ENCODE measurements at regions of chr1 and their contacts with region 1.

Region 1: GRCh38 chr1:235971571-235972310 is 93.1 kb downstream of the NID1 start:
- DNase-seq: peak; percentile 88
- H3K4me3 ChIP-seq: peak overlapping the region; percentile 9 to 29 (median 24)
- H3K27ac ChIP-seq: peak overlapping the region; percentile 91
- H3K4me1 ChIP-seq: peaks cover 16% of the 10 kb centered on the region
- H3K27me3 ChIP-seq: no peaks in the 10 kb centered on the region
- CTCF ChIP-seq: peak; percentile 80 to 90

Region 2: DNA sequence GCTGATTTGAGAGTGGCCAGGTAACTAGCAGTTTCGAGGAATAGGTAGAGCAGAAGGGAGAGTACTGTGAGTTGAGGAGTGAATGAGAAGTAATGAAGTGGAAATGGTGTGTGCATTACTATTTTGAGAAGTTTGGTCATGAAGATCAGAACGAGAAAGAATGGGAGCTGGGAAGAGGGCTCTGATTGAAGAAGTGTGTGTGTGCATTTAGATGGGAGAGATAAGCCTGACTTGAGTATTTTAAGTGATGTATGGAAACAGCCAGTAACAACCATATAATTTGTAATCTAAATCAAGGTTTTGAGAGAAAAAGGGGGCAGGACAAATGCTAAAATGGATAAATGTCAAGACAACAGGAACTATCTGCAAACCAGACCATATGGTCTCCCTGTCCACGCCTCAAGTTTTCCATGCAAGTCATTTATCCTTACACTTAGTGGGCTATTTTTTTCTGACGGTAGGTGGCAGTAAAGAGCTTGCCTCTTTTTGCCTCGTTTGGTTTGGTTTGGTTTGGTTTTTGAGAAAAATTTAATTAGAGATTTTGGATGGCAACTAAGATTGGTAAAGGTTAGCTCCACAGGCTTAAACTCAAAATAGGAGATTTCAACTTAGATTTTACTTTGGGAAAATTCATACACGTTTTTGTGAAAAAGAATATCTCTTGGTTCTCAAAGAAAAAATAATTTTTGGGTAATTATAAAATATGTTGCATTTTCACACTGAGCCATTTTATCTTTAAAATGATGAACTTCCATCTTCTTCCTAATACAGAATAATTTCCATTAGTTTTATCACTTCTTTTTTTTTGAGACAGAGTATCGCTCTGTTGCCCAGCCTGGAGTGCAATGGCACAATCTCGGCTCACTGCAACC is 458.0 kb before region 1 on chr1:
- CTCF ChIA-PET with region 1: no interaction called
- dilution Hi-C with region 1: no loop called
- in situ Hi-C with region 1: loop called in 1 of 2 experiments (anchors 25 kb)
- intact Hi-C with region 1: loop called (anchors 1 kb)
- DNase-seq: peak; percentile 59
- H3K4me3 ChIP-seq: no peak overlapping the region
- H3K27ac ChIP-seq: no peak overlapping the region
- H3K4me1 ChIP-seq: no peaks in the 10 kb centered on the region
- H3K27me3 ChIP-seq: no peaks in the 10 kb centered on the region
- CTCF ChIP-seq: peak; percentile 91 to 95

Region 3: GRCh38 chr1:235783148-235783776 is 188.5 kb before region 1 on chr1:
- CTCF ChIA-PET with region 1: no interaction called
- dilution Hi-C with region 1: no loop called
- in situ Hi-C with region 1: no loop called
- intact Hi-C with region 1: loop called (anchors 1 kb)
- DNase-seq: peak; percentile 21
- H3K4me3 ChIP-seq: no peak overlapping the region
- H3K27ac ChIP-seq: no peak overlapping the region
- H3K4me1 ChIP-seq: peaks cover 4% of the 10 kb centered on the region
- H3K27me3 ChIP-seq: no peaks in the 10 kb centered on the region
- CTCF ChIP-seq: peak; percentile 21 to 42

Region 4: GRCh38 chr1:235908742-235909520 is 62.8 kb before region 1 on chr1:
- CTCF ChIA-PET with region 1: interaction called, 3 read pairs
- dilution Hi-C with region 1: no loop called
- in situ Hi-C with region 1: no loop called
- intact Hi-C with region 1: loop called (anchors 1 kb)
- DNase-seq: peak; percentile 99
- H3K4me3 ChIP-seq: peak overlapping the region; percentile 3 to 25 (median 24)
- H3K27ac ChIP-seq: peak overlapping the region; percentile 99
- H3K4me1 ChIP-seq: peaks cover 49% of the 10 kb centered on the region
- H3K27me3 ChIP-seq: no peaks in the 10 kb centered on the region
- CTCF ChIP-seq: peak in 1 of 2 donors; percentile 3

Region 5: GRCh38 chr1:235933017-235933765 is 38.5 kb before region 1 on chr1:
- CTCF ChIA-PET with region 1: no interaction called
- dilution Hi-C with region 1: no loop called
- in situ Hi-C with region 1: no loop called
- intact Hi-C with region 1: loop called (anchors 1 kb)
- DNase-seq: peak; percentile 82
- H3K4me3 ChIP-seq: peak overlapping the region in 1 of 3 experiments; percentile 4
- H3K27ac ChIP-seq: peak overlapping the region; percentile 78
- H3K4me1 ChIP-seq: peaks cover 33% of the 10 kb centered on the region
- H3K27me3 ChIP-seq: no peaks in the 10 kb centered on the region
- CTCF ChIP-seq: peak; percentile 16 to 49

Region 6: GRCh38 chr1:236064674-236065508 is 93.2 kb after region 1 on chr1 and contains the start of gene NID1:
- CTCF ChIA-PET with region 1: no interaction called
- dilution Hi-C with region 1: no loop called
- in situ Hi-C with region 1: no loop called
- intact Hi-C with region 1: loop called (anchors 2 kb)
- DNase-seq: peak; percentile 42
- H3K4me3 ChIP-seq: peak within 1 kb of the TSS; percentile 54 to 72 (median 55)
- H3K27ac ChIP-seq: no peak within 1 kb of the TSS
- H3K4me1 ChIP-seq: peaks cover 15% of the 10 kb centered on the region
- H3K27me3 ChIP-seq: peaks cover 15% of the 10 kb centered on the region
- CTCF ChIP-seq: no peak
- total RNA-seq, gene NID1: 8.0 to 21.3 TPM